SK-N-SH (cell line): ENCODE measurements at regions of chr15 and their contacts with region 1.

Region 1: GRCh38 chr15:69475769-69476358 is 23.2 kb downstream of the RPLP1 start:
- DNase-seq: peak; percentile 85
- H3K4me3 ChIP-seq: peak overlapping the region in 1 of 2 experiments; percentile 30; a peak in 1 of 4 replicates
- H3K27ac ChIP-seq: no peak overlapping the region
- H3K4me1 ChIP-seq: peaks cover 0 to 8% of the 10 kb centered on the region in 2 experiments; a peak in 2 of 4 replicates
- H3K27me3 ChIP-seq: no peaks in the 10 kb centered on the region
- CTCF ChIP-seq: peak; percentile 86
- EP300 ChIP-seq: no peak
- RAD21 ChIP-seq: peak; percentile 94

Region 2: DNA sequence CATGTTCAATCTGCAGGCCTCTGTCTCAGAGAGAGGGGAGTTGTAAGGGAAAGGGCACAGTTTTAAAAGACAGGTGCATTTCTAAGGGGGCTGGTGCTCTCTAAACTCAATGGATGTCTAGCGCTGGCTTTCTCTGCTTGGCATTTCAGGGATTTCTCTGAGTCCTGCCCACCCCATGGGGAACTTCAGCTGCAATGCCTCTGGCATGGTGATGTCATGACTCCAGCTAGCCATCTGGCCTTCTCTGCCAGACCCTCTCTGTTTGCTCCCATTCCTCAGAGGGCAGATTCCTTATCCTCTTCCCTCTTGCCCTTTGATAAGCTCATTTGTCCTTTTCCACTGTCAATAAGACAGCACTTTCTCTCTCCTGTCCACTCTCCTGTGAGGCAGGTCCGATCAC is 17.5 kb after region 1 on chr15:
- CTCF ChIA-PET with region 1: interaction called, 81 read pairs
- POLR2A ChIA-PET with region 1: no interaction called
- DNase-seq: peak; percentile 47
- H3K4me3 ChIP-seq: no peak overlapping the region
- H3K27ac ChIP-seq: no peak overlapping the region
- H3K4me1 ChIP-seq: peaks cover 0 to 4% of the 10 kb centered on the region in 2 experiments; a peak in 1 of 4 replicates
- H3K27me3 ChIP-seq: peaks cover 8% of the 10 kb centered on the region; the same call in 1 of the 2 replicates
- CTCF ChIP-seq: no peak
- EP300 ChIP-seq: no peak
- RAD21 ChIP-seq: no peak

Region 3: DNA sequence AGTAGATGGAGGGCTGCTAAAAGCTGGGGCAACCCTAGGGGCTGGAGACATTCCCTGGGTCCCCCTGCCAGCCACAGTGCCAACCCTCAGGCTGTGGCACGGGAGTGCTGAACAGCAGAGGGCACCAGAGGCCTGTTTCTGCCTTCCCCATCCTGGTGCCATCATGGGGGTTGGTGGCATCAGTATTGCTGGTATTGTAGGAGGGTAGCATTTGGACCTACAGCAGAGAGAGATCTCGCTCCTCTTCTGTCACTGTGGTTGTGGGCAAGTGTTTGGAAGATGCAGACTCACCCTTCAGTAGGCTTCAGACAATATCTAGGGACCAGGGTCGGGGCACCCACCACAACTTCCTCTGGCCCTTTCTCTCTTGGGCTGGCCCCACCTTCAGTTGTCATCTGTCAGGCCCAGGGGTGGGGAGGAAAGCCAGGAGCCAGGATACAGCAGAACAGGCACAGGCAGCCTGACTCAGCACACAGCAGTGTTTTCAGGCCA is 100.2 kb after region 1 on chr15:
- CTCF ChIA-PET with region 1: interaction called, 12 read pairs
- POLR2A ChIA-PET with region 1: no interaction called
- DNase-seq: peak; percentile 84
- H3K4me3 ChIP-seq: no peak overlapping the region
- H3K27ac ChIP-seq: no peak overlapping the region
- H3K4me1 ChIP-seq: peaks cover 0 to 11% of the 10 kb centered on the region in 2 experiments; a peak in 1 of 4 replicates
- H3K27me3 ChIP-seq: peaks cover 8% of the 10 kb centered on the region; the same call in 1 of the 2 replicates
- CTCF ChIP-seq: peak; percentile 73
- EP300 ChIP-seq: no peak
- RAD21 ChIP-seq: peak; percentile 95

Region 4: GRCh38 chr15:70488002-70488605 is 1012.2 kb after region 1 on chr15:
- CTCF ChIA-PET with region 1: interaction called, 31 read pairs
- POLR2A ChIA-PET with region 1: no interaction called
- DNase-seq: peak; percentile 84
- H3K4me3 ChIP-seq: no peak overlapping the region; a peak in 1 of 4 replicates
- H3K27ac ChIP-seq: peak overlapping the region in 1 of 2 experiments; percentile 39; a peak in 1 of 4 replicates
- H3K4me1 ChIP-seq: peaks cover 15 to 24% of the 10 kb centered on the region in 2 experiments; a peak in 3 of 4 replicates
- H3K27me3 ChIP-seq: no peaks in the 10 kb centered on the region
- CTCF ChIP-seq: peak; percentile 95
- EP300 ChIP-seq: no peak; a peak in 1 of 4 replicates
- RAD21 ChIP-seq: peak; percentile 97